ENCODE measurements at regions of chr16 and their contacts with region 1.

Region 1: DNA sequence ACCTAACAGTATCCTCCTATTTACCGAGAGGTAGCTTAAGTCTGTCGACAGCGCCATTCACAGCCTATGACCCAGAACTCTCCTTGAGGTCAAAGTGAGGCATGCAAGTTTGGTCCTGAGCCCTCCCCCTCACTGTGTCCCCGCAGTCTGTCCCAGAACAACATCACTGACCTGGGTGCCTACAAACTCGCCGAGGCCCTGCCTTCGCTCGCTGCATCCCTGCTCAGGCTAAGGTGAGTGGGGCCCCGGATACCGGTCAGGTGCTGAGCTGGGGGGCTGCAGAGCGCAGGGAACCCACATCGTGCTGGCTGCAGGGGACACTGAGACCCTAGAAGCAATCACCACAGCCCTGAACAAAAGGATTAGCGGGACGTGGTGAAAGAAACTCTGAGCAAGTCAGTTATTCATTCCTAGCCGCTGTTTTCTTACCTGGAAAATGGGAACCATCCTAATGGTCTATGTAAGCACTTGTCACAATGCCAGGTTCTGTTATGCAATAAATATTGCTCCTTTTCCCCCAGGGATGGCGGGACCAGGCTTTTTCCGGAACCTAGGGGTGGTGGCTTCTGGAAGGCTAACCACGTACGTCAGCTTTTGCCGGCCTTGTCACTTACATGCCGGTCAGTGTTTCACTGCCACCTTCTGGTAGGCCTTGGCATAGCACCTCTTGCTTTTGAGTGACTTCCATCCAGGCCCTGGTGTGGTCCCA is 23.8 kb downstream of the DEXI start:
- DNase-seq: peak; percentile 50
- H3K4me3 ChIP-seq: no peak overlapping the region
- H3K27me3 ChIP-seq: no peaks in the 10 kb centered on the region; the same call in 1 of the 2 replicates
- CTCF ChIP-seq: peak; percentile 99

Region 2: DNA sequence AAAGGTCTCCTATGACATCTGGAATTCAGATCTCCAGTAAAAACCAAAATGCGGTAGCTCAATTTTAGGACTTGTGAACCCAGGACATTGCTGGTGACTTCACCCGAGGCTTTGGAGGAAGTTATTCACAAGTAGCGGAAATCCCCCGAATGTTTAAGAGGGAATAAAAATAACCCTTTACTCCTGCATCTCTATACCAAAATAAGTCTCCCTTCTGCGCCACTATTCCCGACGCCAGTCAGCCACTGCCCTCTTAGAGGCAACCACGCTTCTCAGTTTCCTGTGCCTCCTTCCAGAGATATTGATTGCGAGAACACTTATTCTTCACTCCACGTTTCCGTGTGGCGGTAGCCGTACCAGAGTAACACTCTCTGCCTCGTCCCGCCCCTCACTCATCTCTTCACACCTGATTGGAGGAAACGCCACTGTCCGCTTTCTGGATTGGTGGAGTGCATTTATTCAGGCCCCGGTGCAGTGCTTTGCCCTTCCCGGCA is 365.4 kb before region 1 on chr16:
- CTCF ChIA-PET with region 1: no interaction called
- POLR2A ChIA-PET with region 1: interaction called, 12 read pairs
- DNase-seq: no peak
- H3K4me3 ChIP-seq: no peak overlapping the region
- H3K27me3 ChIP-seq: no peaks in the 10 kb centered on the region
- CTCF ChIP-seq: no peak

Region 3: GRCh38 chr16:10752843-10753523 is 165.5 kb before region 1 on chr16:
- CTCF ChIA-PET with region 1: interaction called, 10 read pairs
- POLR2A ChIA-PET with region 1: no interaction called
- DNase-seq: no peak
- H3K4me3 ChIP-seq: no peak overlapping the region
- H3K27me3 ChIP-seq: no peaks in the 10 kb centered on the region
- CTCF ChIP-seq: no peak

Region 4: GRCh38 chr16:10859758-10860057 is 58.7 kb before region 1 on chr16:
- CTCF ChIA-PET with region 1: no interaction called
- POLR2A ChIA-PET with region 1: no interaction called
- DNase-seq: no peak
- H3K4me3 ChIP-seq: no peak overlapping the region
- H3K27me3 ChIP-seq: no peaks in the 10 kb centered on the region
- CTCF ChIP-seq: no peak

Region 5: GRCh38 chr16:10895053-10895946 is 23.1 kb before region 1 on chr16:
- CTCF ChIA-PET with region 1: interaction called, 11 read pairs
- POLR2A ChIA-PET with region 1: no interaction called
- DNase-seq: no peak
- H3K4me3 ChIP-seq: no peak overlapping the region
- H3K27me3 ChIP-seq: peaks cover 2% of the 10 kb centered on the region
- CTCF ChIP-seq: no peak

Measured in BJ (cell line).